BJ (cell line): ENCODE measurements at regions of chr12 and their contacts with region 1.

Region 1: GRCh38 chr12:69900720-69901131 is 75.7 kb downstream of the MYRFL start:
- DNase-seq: no peak
- H3K4me3 ChIP-seq: no peak overlapping the region
- H3K27me3 ChIP-seq: no peaks in the 10 kb centered on the region
- CTCF ChIP-seq: peak; percentile 66

Region 2: GRCh38 chr12:69392179-69392928 is 508.4 kb before region 1 on chr12:
- CTCF ChIA-PET with region 1: no interaction called
- POLR2A ChIA-PET with region 1: no interaction called
- DNase-seq: no peak
- H3K4me3 ChIP-seq: no peak overlapping the region
- H3K27me3 ChIP-seq: no peaks in the 10 kb centered on the region
- CTCF ChIP-seq: no peak

Region 3: GRCh38 chr12:69879041-69879960 is 21.4 kb before region 1 on chr12:
- CTCF ChIA-PET with region 1: interaction called, 19 read pairs
- POLR2A ChIA-PET with region 1: no interaction called
- DNase-seq: no peak
- H3K4me3 ChIP-seq: peak overlapping the region; percentile 8; the same call in 1 of the 2 replicates
- H3K27me3 ChIP-seq: no peaks in the 10 kb centered on the region
- CTCF ChIP-seq: peak; percentile 87

Region 4: GRCh38 chr12:69987579-69988091 is 86.9 kb after region 1 on chr12:
- CTCF ChIA-PET with region 1: interaction called, 16 read pairs
- POLR2A ChIA-PET with region 1: no interaction called
- DNase-seq: peak; percentile 85
- H3K4me3 ChIP-seq: no peak overlapping the region
- H3K27me3 ChIP-seq: no peaks in the 10 kb centered on the region
- CTCF ChIP-seq: no peak